A673 (cell line): ENCODE measurements at regions of chr2 and their contacts with region 1.

Region 1: GRCh38 chr2:69704446-69704845 is 37.5 kb upstream of the ANXA4 start:
- DNase-seq: no peak
- H3K4me3 ChIP-seq: no peak overlapping the region
- H3K27ac ChIP-seq: no peak overlapping the region
- H3K4me1 ChIP-seq: no peaks in the 10 kb centered on the region
- H3K27me3 ChIP-seq: no peaks in the 10 kb centered on the region
- CTCF ChIP-seq: no peak

Region 2: GRCh38 chr2:69100220-69100723 is 604.2 kb before region 1 on chr2:
- CTCF ChIA-PET with region 1: no interaction called
- POLR2A ChIA-PET with region 1: no interaction called
- intact Hi-C with region 1: no loop called
- DNase-seq: peak; percentile 73
- H3K4me3 ChIP-seq: no peak overlapping the region
- H3K27ac ChIP-seq: peak overlapping the region; percentile 76
- H3K4me1 ChIP-seq: peaks cover 47% of the 10 kb centered on the region
- H3K27me3 ChIP-seq: no peaks in the 10 kb centered on the region
- CTCF ChIP-seq: no peak

Region 3: GRCh38 chr2:70241338-70241737 is 536.9 kb after region 1 on chr2:
- CTCF ChIA-PET with region 1: no interaction called
- POLR2A ChIA-PET with region 1: interaction called, 33 read pairs
- intact Hi-C with region 1: no loop called
- DNase-seq: peak; percentile 43
- H3K4me3 ChIP-seq: no peak overlapping the region
- H3K27ac ChIP-seq: no peak overlapping the region
- H3K4me1 ChIP-seq: peaks cover 17% of the 10 kb centered on the region
- H3K27me3 ChIP-seq: no peaks in the 10 kb centered on the region
- CTCF ChIP-seq: no peak